Activated CD4-positive, alpha-beta memory T cell treated with anti-CD3 and anti-CD28 coated beads, Interleukin-2, amount 10 ng/mL, durations not matched to agents 7 days and 5 days (primary cell): ENCODE measurements at regions of chr7 and their contacts with region 1.

Region 1: GRCh38 chr7:44606450-44607254 is at the start of gene OGDH:
- DNase-seq: peak; percentile 100
- H3K4me3 Mint-ChIP-seq: peak within 1 kb of the TSS; percentile 98
- H3K27ac Mint-ChIP-seq: peak within 1 kb of the TSS; percentile 98
- H3K4me1 Mint-ChIP-seq: peaks cover 48% of the 10 kb centered on the region
- H3K27me3 Mint-ChIP-seq: peaks cover 6% of the 10 kb centered on the region
- total RNA-seq, gene OGDH: 164 to 166 TPM

Region 2: GRCh38 chr7:44581879-44582603 is 24.6 kb before region 1 on chr7 and contains the start of gene TMED4:
- CTCF ChIA-PET with region 1: no interaction called
- POLR2A ChIA-PET with region 1: interaction called, 57 read pairs
- DNase-seq: peak; percentile 100
- H3K4me3 Mint-ChIP-seq: peak within 1 kb of the TSS; percentile 92
- H3K27ac Mint-ChIP-seq: peak within 1 kb of the TSS; percentile 85
- H3K4me1 Mint-ChIP-seq: peaks cover 42% of the 10 kb centered on the region
- H3K27me3 Mint-ChIP-seq: no peaks in the 10 kb centered on the region
- total RNA-seq, gene TMED4: 76.0 to 81.8 TPM

Region 3: GRCh38 chr7:44622307-44623151 is 15.9 kb after region 1 on chr7:
- CTCF ChIA-PET with region 1: interaction called, 8 read pairs
- POLR2A ChIA-PET with region 1: interaction called, 1,257 read pairs
- DNase-seq: peak; percentile 64
- H3K4me3 Mint-ChIP-seq: peak overlapping the region; percentile 54
- H3K27ac Mint-ChIP-seq: peak overlapping the region; percentile 91
- H3K4me1 Mint-ChIP-seq: peaks cover 93% of the 10 kb centered on the region
- H3K27me3 Mint-ChIP-seq: no peaks in the 10 kb centered on the region

Region 4: DNA sequence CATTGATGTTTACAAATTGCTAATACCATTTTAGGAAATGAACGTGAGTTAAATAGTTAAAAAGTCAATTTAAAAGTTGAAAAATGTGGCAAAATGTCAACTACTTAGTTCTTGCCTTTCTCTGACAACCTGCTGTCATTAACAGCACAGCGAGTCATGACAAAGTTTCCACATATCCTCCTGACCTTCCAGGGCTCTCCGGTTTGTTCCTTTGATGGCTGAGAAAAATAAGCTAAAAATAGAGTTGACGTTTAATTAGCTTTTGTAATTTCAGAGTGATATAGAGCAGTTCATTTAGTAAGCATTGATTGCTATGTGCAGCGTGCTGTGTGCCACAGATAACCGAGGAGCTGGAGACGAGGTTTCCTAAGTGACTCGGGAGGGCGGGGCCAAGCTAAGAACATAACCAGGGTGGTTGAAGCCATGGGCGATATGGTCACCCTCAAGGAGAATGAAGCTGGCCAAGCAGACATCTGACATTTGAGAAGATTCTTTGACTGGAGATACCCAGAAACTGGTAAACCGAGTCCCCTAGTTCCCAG is 47.7 kb after region 1 on chr7:
- CTCF ChIA-PET with region 1: no interaction called
- POLR2A ChIA-PET with region 1: interaction called, 22 read pairs
- DNase-seq: no peak
- H3K4me3 Mint-ChIP-seq: no peak overlapping the region
- H3K27ac Mint-ChIP-seq: no peak overlapping the region
- H3K4me1 Mint-ChIP-seq: peaks cover 2% of the 10 kb centered on the region
- H3K27me3 Mint-ChIP-seq: no peaks in the 10 kb centered on the region

Region 5: DNA sequence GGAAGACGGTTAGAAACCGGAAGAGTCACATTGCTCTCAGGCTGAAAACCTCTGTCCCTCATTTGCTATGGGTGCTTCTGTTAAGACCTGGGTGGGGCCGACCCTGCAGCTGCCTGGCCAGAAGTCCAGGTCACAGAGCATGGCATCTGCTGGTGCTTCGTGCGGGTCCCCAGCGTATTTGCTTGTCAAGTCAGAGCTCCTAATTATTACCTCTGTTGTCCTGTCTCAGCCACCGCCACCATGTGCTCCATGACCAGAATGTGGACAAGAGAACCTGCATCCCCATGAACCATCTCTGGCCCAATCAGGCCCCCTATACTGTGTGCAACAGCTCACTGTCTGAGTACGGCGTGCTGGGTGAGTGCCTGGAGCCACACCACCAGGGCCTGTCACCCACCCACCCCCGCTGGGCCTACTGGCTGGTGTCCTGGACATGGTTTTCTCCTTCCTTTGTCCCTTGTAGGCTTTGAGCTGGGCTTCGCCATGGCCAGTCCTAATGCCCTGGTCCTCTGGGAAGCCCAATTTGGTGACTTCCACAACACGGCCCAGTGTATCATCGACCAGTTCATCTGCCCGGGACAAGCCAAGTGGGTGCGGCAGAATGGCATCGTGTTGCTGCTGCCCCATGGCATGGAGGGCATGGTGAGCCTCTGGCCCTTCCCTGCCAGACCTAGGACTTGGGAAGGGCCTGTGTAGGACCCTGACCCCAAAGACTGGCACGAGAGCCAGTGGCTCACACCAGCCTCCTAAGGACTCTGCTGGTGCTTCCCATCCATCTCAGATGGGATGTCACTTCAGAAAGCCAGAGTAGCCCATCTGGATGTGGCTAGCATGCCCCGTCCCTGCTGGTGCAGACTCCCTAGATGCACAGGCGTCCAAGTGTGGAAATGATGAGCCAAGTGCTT is 90.7 kb after region 1 on chr7:
- CTCF ChIA-PET with region 1: no interaction called
- POLR2A ChIA-PET with region 1: no interaction called
- DNase-seq: no peak
- H3K4me3 Mint-ChIP-seq: no peak overlapping the region
- H3K27ac Mint-ChIP-seq: no peak overlapping the region
- H3K4me1 Mint-ChIP-seq: no peaks in the 10 kb centered on the region
- H3K27me3 Mint-ChIP-seq: no peaks in the 10 kb centered on the region

Region 6: GRCh38 chr7:44797329-44798251 is 190.9 kb after region 1 on chr7:
- CTCF ChIA-PET with region 1: interaction called, 3 read pairs
- POLR2A ChIA-PET with region 1: interaction called, 37 read pairs
- DNase-seq: peak; percentile 89
- H3K4me3 Mint-ChIP-seq: peak overlapping the region; percentile 81
- H3K27ac Mint-ChIP-seq: peak overlapping the region; percentile 93
- H3K4me1 Mint-ChIP-seq: peaks cover 44% of the 10 kb centered on the region
- H3K27me3 Mint-ChIP-seq: no peaks in the 10 kb centered on the region

Region 7: DNA sequence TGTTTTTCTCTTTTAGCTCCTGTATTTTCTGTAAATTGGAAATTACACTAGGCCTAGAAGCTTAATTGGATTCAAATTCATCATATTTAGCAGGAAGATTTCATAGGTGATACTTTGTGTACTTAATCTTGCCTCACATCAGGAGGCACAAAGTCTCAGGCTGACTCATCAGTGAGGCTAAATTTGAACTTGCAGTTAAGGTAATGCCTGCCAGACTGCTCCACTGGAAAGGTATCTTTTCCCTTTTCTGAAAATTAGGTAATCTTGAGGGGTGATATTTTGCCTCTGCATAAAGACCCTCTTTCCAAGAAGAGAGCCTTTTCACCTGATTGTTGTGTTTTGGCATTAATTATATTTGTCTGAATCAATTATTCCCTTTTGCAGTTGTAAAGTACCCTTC is 204.4 kb after region 1 on chr7:
- CTCF ChIA-PET with region 1: no interaction called
- POLR2A ChIA-PET with region 1: no interaction called
- DNase-seq: no peak
- H3K4me3 Mint-ChIP-seq: no peak overlapping the region
- H3K27ac Mint-ChIP-seq: no peak overlapping the region
- H3K4me1 Mint-ChIP-seq: peaks cover 4% of the 10 kb centered on the region
- H3K27me3 Mint-ChIP-seq: no peaks in the 10 kb centered on the region